ENCODE measurements at regions of chr12 and their contacts with region 1.

Region 1: GRCh38 chr12:84874125-84874824 is 38.3 kb downstream of the SLC6A15 start:
- DNase-seq: no peak
- ATAC-seq: peak; percentile 71 to 93 (median 89)
- H3K4me3 ChIP-seq: no peak overlapping the region
- H3K27ac ChIP-seq: no peak overlapping the region
- H3K4me1 ChIP-seq: no peaks in the 10 kb centered on the region
- H3K27me3 ChIP-seq: peaks cover 0 to 7% (median 0%) of the 10 kb centered on the region in 4 donors
- CTCF ChIP-seq: peak; percentile 37 to 77 (median 55)

Region 2: GRCh38 chr12:85029456-85029855 is 155.2 kb after region 1 on chr12:
- intact Hi-C with region 1: loop called (anchors 5 to 10 kb)
- DNase-seq: no peak
- ATAC-seq: peak; percentile 55 to 60 (median 58)
- H3K4me3 ChIP-seq: no peak overlapping the region
- H3K27ac ChIP-seq: no peak overlapping the region
- H3K4me1 ChIP-seq: no peaks in the 10 kb centered on the region
- H3K27me3 ChIP-seq: peaks cover 0 to 8% (median 0%) of the 10 kb centered on the region in 4 donors
- CTCF ChIP-seq: peak in 3 of 4 donors; percentile 29 to 47 (median 34)

Region 3: GRCh38 chr12:85036241-85036707 is 162.0 kb after region 1 on chr12 and contains the starts of genes LRRIQ1 and TSPAN19:
- intact Hi-C with region 1: loop called in 1 of 3 experiments (anchors 5 kb)
- DNase-seq: peak; percentile 50 to 80 (median 75)
- ATAC-seq: peak; percentile 97 to 100 (median 99)
- H3K4me3 ChIP-seq: peak within 1 kb of the TSS; percentile 20 to 59 (median 44)
- H3K27ac ChIP-seq: no peak within 1 kb of the TSS
- H3K4me1 ChIP-seq: no peaks in the 10 kb centered on the region
- H3K27me3 ChIP-seq: no peaks in the 10 kb centered on the region
- CTCF ChIP-seq: no peak
- total RNA-seq, gene LRRIQ1: 0.31 to 0.92 (median 0.64) TPM
- total RNA-seq, gene TSPAN19: 0.15 to 0.51 TPM in 2 of 6 donors, not detected in the others

Measured in pancreas (tissue), 10 donors.